HAP-1 (cell line): ENCODE measurements at regions of chr5 and their contacts with region 1.

Region 1: GRCh38 chr5:159262859-159263567 is at the start of gene UBLCP1:
- DNase-seq: peak; percentile 72 to 85
- H3K4me3 ChIP-seq: peak within 1 kb of the TSS; percentile 89
- H3K4me1 ChIP-seq: peaks cover 16% of the 10 kb centered on the region
- H3K27me3 ChIP-seq: no peaks in the 10 kb centered on the region

Region 2: DNA sequence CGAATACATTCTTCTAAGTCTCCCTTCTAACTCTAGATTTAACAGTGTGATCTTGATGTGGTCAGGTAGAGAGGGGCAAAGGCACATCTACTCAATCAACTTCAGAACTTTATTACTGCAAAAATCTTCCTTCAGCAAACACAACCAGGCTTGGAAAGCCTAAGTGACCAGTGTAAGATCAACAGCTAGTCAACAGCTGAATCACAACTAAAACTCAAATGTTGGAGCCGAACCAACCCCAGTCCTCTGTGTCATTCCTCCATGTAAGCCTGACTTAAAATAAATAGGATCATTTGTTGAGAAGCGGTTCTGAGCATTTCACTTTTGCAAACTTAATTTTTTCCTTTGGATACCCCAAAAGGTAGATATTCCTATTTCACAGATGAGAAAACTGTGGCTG is 516.0 kb before region 1 on chr5:
- in situ Hi-C with region 1: no loop called
- DNase-seq: no peak
- H3K4me3 ChIP-seq: no peak overlapping the region
- H3K4me1 ChIP-seq: no peaks in the 10 kb centered on the region
- H3K27me3 ChIP-seq: peaks cover 2% of the 10 kb centered on the region; the same call in 1 of the 2 replicates

Region 3: DNA sequence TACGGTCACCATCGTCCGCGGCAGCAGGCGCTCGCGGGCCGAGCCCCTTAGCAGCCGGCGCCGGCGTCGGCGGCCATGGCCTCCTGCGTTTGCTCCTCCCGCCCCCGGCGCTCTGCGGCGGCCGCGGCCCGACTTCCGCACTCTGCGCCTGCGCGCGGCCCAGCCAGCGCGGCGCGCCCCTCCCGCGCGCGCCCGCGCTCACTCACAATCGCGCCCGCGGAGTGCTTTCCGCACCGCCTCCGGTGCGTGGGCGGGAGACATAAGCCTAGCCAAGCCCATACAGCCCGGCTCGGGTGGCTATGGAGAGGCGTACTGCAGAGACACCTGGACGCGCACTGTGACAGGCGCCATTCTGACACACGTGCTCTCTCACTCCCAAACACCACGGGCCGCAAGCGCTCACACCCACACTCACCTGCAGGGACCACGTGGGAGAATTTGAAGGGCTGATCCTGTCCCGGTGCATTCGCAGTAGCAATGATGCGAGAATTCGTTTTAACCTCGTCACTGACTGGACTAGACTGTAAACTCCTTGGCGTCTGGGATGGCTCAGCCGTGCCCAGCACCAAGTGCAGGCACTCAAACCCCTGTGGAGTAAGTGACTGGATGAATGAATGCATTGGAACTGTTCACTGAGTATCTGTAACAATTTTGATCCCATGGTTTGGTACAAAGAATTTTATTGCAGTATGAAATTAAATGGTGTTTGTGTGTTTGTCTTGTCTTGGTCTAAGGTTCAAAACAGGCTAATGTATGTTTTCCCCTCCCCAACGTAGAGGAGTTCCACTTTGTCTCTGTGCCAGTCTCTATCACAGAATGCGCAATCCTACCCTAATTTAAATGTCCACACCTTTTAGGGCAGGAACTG is 53.3 kb before region 1 on chr5 and contains the start of gene RNF145:
- in situ Hi-C with region 1: loop called (anchors 10 kb)
- DNase-seq: peak; percentile 56 to 81
- H3K4me3 ChIP-seq: peak within 1 kb of the TSS; percentile 60
- H3K4me1 ChIP-seq: peaks cover 39% of the 10 kb centered on the region
- H3K27me3 ChIP-seq: no peaks in the 10 kb centered on the region